T-cell (primary cell): ENCODE measurements at regions of chr12 and their contacts with region 1.

Region 1: GRCh38 chr12:107372229-107372658 is 278.9 kb upstream of the CRY1 start:
- DNase-seq: peak in 32 of 35 experiments; percentile 2 to 80 (median 35)
- ATAC-seq: peak; percentile 69 to 74 (median 72)
- H3K4me3 ChIP-seq: peak overlapping the region in 1 of 2 donors; percentile 30
- H3K4me3 Mint-ChIP-seq: peak overlapping the region; percentile 21 to 73 (median 52)
- H3K27ac ChIP-seq: peak overlapping the region; percentile 76
- H3K27ac Mint-ChIP-seq: peak overlapping the region; percentile 90 to 93
- H3K4me1 ChIP-seq: peaks cover 65 to 69% of the 10 kb centered on the region in 2 experiments
- H3K4me1 Mint-ChIP-seq: peaks cover 77 to 88% (median 84%) of the 10 kb centered on the region in 3 donors
- H3K27me3 ChIP-seq: no peaks in the 10 kb centered on the region
- H3K27me3 Mint-ChIP-seq: no peaks in the 10 kb centered on the region

Region 2: GRCh38 chr12:107275530-107275929 is 96.7 kb before region 1 on chr12:
- CTCF ChIA-PET with region 1: interaction called in 1 of 2 experiments, 3 read pairs
- POLR2A ChIA-PET with region 1: interaction called in 1 of 2 experiments, 11 read pairs
- DNase-seq: no peak
- ATAC-seq: no peak
- H3K4me3 ChIP-seq: no peak overlapping the region
- H3K4me3 Mint-ChIP-seq: no peak overlapping the region
- H3K27ac ChIP-seq: no peak overlapping the region
- H3K27ac Mint-ChIP-seq: no peak overlapping the region
- H3K4me1 ChIP-seq: no peaks in the 10 kb centered on the region
- H3K4me1 Mint-ChIP-seq: no peaks in the 10 kb centered on the region
- H3K27me3 ChIP-seq: no peaks in the 10 kb centered on the region
- H3K27me3 Mint-ChIP-seq: peaks cover 4 to 6% of the 10 kb centered on the region in 2 donors

Region 3: DNA sequence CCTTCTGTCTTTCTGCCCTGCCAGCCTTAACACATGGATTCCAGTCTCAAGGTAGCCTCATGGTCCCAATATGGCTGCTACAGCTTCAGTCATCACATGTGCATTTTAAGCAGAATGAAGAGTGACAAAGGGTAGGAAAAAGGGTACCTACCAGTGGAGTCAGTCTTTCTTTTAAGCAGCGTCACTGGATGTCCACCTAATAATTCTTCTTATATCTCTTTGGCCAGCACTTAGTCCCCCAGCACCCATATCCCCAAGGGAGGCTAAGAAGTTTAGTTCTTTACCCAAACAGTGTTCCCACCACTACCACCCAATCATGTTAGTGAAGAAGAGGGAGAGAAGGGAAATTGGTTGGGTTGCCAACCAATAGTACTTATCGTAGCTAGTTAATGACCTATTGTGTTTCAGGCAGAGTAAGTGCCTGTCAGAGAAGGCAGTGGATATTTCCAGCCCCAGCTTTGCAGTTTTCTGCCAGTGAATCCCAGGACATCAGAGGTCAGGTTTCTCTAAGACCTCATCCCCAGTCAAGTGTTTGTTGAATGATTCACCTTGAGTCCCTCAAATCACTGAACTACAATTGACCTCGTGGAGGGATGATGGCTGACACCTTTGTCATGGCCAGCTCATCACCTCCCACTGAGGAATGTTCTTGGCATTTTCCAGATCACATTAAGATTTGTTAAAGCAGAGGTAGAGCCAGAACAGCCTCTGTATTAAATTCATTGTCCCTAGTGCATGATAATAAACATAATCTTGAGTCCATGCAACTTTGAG is 28.0 kb before region 1 on chr12:
- CTCF ChIA-PET with region 1: no interaction called
- POLR2A ChIA-PET with region 1: interaction called, 3 to 11 read pairs
- DNase-seq: no peak
- ATAC-seq: no peak
- H3K4me3 ChIP-seq: no peak overlapping the region
- H3K4me3 Mint-ChIP-seq: no peak overlapping the region
- H3K27ac ChIP-seq: no peak overlapping the region
- H3K27ac Mint-ChIP-seq: peak overlapping the region in 1 of 2 donors; percentile 18
- H3K4me1 ChIP-seq: peaks cover 4 to 21% of the 10 kb centered on the region in 2 experiments
- H3K4me1 Mint-ChIP-seq: peaks cover 38 to 71% (median 44%) of the 10 kb centered on the region in 3 donors
- H3K27me3 ChIP-seq: no peaks in the 10 kb centered on the region
- H3K27me3 Mint-ChIP-seq: no peaks in the 10 kb centered on the region

Region 4: GRCh38 chr12:107385509-107385908 is 13.3 kb after region 1 on chr12:
- CTCF ChIA-PET with region 1: interaction called, 6 read pairs
- POLR2A ChIA-PET with region 1: interaction called in 1 of 2 experiments, 10 read pairs
- DNase-seq: no peak
- ATAC-seq: no peak
- H3K4me3 ChIP-seq: no peak overlapping the region
- H3K4me3 Mint-ChIP-seq: no peak overlapping the region
- H3K27ac ChIP-seq: no peak overlapping the region
- H3K27ac Mint-ChIP-seq: no peak overlapping the region
- H3K4me1 ChIP-seq: peaks cover 11 to 21% of the 10 kb centered on the region in 2 experiments
- H3K4me1 Mint-ChIP-seq: peaks cover 38 to 60% (median 47%) of the 10 kb centered on the region in 3 donors
- H3K27me3 ChIP-seq: no peaks in the 10 kb centered on the region
- H3K27me3 Mint-ChIP-seq: no peaks in the 10 kb centered on the region